ENCODE measurements at regions of chr5 and their contacts with region 1.

Region 1: GRCh38 chr5:93607367-93608258 is 24.6 kb downstream of the NR2F1 start:
- DNase-seq: peak; percentile 62
- H3K4me3 Mint-ChIP-seq: no peak overlapping the region
- H3K27ac Mint-ChIP-seq: no peak overlapping the region
- H3K4me1 Mint-ChIP-seq: peaks cover 10% of the 10 kb centered on the region
- H3K27me3 Mint-ChIP-seq: peaks cover 80% of the 10 kb centered on the region
- CTCF ChIP-seq: peak; percentile 58

Region 2: DNA sequence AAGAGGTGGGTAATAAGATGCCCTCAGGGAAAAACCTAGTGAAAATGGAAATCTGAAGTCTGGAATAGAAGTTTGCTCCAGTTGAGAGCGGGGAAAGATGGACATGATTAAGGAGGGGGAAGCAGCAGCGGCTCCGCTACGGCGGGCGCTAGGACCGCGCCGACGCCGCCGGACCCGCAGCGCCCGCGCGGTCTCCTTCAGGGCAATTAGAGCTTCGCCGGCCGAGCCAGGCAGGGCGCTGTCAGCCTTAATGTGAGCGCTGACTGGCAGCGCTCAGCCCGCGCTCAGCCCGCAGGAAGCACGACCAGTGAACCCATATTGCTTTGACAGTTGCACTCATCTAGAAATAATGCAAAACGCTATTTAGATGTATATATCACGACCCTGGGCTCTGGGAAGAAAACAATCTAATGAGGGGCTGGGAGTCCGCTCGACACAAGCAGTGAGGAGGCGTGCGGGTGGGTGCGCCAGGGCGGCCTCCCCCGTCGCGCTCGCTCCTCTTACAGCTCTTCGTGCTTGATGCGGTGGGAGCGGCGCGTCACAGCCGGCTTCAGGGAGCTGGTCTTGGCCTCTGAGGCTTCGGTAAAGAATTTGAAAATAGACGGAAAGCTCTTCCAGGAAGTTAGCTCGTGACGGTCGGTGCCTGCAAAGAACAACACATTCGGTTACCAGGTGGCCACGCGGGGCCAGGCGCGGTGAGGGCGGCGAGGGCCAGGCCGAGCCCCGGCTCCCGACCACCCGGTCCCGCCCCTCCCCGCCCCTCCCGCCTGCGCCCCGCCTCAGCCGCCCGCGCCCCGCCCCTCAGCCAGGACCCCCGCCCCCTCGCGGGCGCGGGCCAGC is 13.1 kb after region 1 on chr5:
- CTCF ChIA-PET with region 1: interaction called, 26 read pairs
- POLR2A ChIA-PET with region 1: interaction called, 5 read pairs
- intact Hi-C with region 1: no loop called
- DNase-seq: peak; percentile 72
- H3K4me3 Mint-ChIP-seq: peak overlapping the region; percentile 89
- H3K27ac Mint-ChIP-seq: peak overlapping the region; percentile 76
- H3K4me1 Mint-ChIP-seq: peaks cover 6% of the 10 kb centered on the region
- H3K27me3 Mint-ChIP-seq: no peaks in the 10 kb centered on the region
- CTCF ChIP-seq: no peak

Region 3: DNA sequence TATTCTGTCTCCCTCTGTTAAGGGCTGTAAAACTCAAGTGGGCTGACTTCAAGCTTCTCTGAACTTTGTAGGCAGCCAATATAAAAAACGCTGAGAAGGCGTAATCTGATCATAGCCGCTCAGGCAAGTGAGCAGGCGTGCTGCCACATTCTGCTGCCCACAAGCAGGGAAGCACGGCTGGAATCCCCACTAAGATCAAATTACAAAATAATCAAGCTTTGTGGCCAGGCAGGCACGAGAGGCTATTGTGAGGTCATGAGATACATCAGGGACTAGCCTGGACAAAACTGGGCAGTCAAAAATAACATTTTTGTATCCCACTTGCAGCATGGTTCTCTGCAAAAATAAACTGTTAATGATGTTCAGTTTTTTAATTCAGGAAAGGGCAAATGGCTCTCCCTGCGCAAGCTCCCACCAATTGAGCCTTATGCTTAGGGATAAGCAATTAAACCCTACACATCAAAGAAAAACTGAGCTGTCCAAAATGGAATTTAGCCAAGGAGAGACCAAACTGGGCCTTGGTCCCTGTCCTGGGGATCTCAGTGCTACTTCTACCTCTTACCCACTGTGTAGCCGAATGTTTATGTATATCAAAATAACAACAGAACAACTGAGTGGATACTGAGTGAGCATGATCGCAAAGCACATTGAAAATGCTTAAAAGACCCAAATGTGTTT is 69.9 kb after region 1 on chr5:
- CTCF ChIA-PET with region 1: no interaction called
- POLR2A ChIA-PET with region 1: no interaction called
- intact Hi-C with region 1: no loop called
- DNase-seq: peak; percentile 88
- H3K4me3 Mint-ChIP-seq: no peak overlapping the region
- H3K27ac Mint-ChIP-seq: no peak overlapping the region
- H3K4me1 Mint-ChIP-seq: peaks cover 4% of the 10 kb centered on the region
- H3K27me3 Mint-ChIP-seq: no peaks in the 10 kb centered on the region
- CTCF ChIP-seq: no peak

Region 4: GRCh38 chr5:93789173-93790070 is 181.8 kb after region 1 on chr5:
- CTCF ChIA-PET with region 1: interaction called, 18 read pairs
- POLR2A ChIA-PET with region 1: interaction called, 4 read pairs
- intact Hi-C with region 1: loop called (anchors 2 kb)
- DNase-seq: peak; percentile 43
- H3K4me3 Mint-ChIP-seq: no peak overlapping the region
- H3K27ac Mint-ChIP-seq: no peak overlapping the region
- H3K4me1 Mint-ChIP-seq: peaks cover 5% of the 10 kb centered on the region
- H3K27me3 Mint-ChIP-seq: no peaks in the 10 kb centered on the region
- CTCF ChIP-seq: no peak

Region 5: GRCh38 chr5:93800988-93801811 is 193.6 kb after region 1 on chr5:
- CTCF ChIA-PET with region 1: interaction called, 50 read pairs
- POLR2A ChIA-PET with region 1: no interaction called
- intact Hi-C with region 1: loop called (anchors 2 kb)
- DNase-seq: peak; percentile 69
- H3K4me3 Mint-ChIP-seq: no peak overlapping the region
- H3K27ac Mint-ChIP-seq: no peak overlapping the region
- H3K4me1 Mint-ChIP-seq: peaks cover 5% of the 10 kb centered on the region
- H3K27me3 Mint-ChIP-seq: no peaks in the 10 kb centered on the region
- CTCF ChIP-seq: peak; percentile 80

Region 6: GRCh38 chr5:94125107-94125506 is 517.5 kb after region 1 on chr5:
- CTCF ChIA-PET with region 1: no interaction called
- POLR2A ChIA-PET with region 1: no interaction called
- intact Hi-C with region 1: no loop called
- DNase-seq: no peak
- H3K4me3 Mint-ChIP-seq: no peak overlapping the region
- H3K27ac Mint-ChIP-seq: no peak overlapping the region
- H3K4me1 Mint-ChIP-seq: no peaks in the 10 kb centered on the region
- H3K27me3 Mint-ChIP-seq: no peaks in the 10 kb centered on the region
- CTCF ChIP-seq: no peak

Region 7: DNA sequence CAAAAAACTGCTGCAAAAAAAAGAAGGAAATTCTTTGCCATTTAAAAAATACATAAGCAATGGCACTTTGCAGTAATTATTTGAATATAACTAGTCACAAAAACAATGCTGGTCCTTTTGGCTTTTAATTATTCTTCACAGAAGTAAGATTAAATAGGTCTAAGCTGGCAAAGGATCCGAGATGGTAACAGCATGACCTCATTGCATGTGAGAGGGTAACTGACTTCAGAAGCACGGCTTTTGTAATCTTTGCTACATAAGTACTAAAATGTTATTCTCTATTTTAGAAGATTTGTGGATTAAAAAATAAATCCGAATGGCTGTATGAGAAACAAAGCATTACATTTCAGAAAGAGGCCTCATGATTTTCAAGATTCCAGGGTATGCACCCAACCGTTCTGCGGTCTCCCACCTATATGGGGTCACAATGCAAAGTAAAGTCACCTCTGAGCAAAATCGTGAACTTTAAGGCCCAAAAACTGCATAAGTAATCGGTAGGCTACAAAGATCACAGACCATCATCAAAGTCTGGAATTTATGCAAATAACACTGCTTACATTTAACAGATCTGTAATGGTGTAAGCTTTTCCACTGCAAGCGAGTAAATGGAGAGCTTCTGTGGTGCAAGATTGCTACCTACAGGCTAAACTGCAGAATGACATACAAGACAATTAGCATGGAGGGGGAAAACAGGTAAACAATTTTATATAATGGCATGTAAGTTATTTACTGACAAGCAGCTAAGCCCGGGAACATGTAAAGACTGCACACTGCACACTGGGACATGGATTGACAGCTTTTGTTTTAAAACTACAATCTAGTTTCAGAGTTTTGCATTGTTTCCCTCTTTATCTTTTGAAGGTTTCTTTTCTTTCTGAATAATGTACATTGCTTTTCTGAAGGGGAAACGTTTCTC is 1242.5 kb after region 1 on chr5:
- CTCF ChIA-PET with region 1: no interaction called
- POLR2A ChIA-PET with region 1: no interaction called
- intact Hi-C with region 1: loop called (anchors 10 kb)
- DNase-seq: peak; percentile 44
- H3K4me3 Mint-ChIP-seq: no peak overlapping the region
- H3K27ac Mint-ChIP-seq: no peak overlapping the region
- H3K4me1 Mint-ChIP-seq: peaks cover 5% of the 10 kb centered on the region
- H3K27me3 Mint-ChIP-seq: no peaks in the 10 kb centered on the region
- CTCF ChIP-seq: peak; percentile 61

Measured in MCF 10A (cell line).